Right cardiac atrium (tissue), 5 donors: ENCODE measurements at regions of chr6 and their contacts with region 1.

Region 1: GRCh38 chr6:139355172-139355571 is 19.3 kb downstream of the CITED2 start:
- DNase-seq: no peak
- ATAC-seq: no peak
- H3K4me3 ChIP-seq: no peak overlapping the region
- H3K27ac ChIP-seq: no peak overlapping the region
- H3K4me1 ChIP-seq: no peaks in the 10 kb centered on the region
- H3K27me3 ChIP-seq: no peaks in the 10 kb centered on the region

Region 2: GRCh38 chr6:139240161-139241010 is 114.8 kb before region 1 on chr6:
- intact Hi-C with region 1: loop called in 1 of 4 experiments (anchors 10 kb)
- DNase-seq: no peak
- ATAC-seq: no peak
- H3K4me3 ChIP-seq: no peak overlapping the region
- H3K27ac ChIP-seq: no peak overlapping the region
- H3K4me1 ChIP-seq: no peaks in the 10 kb centered on the region
- H3K27me3 ChIP-seq: no peaks in the 10 kb centered on the region

Region 3: GRCh38 chr6:139308286-139308916 is 46.8 kb before region 1 on chr6:
- intact Hi-C with region 1: loop called in 1 of 4 experiments (anchors 10 kb)
- DNase-seq: no peak
- ATAC-seq: peak in 1 of 2 donors; percentile 54
- H3K4me3 ChIP-seq: no peak overlapping the region
- H3K27ac ChIP-seq: no peak overlapping the region
- H3K4me1 ChIP-seq: no peaks in the 10 kb centered on the region
- H3K27me3 ChIP-seq: no peaks in the 10 kb centered on the region

Region 4: DNA sequence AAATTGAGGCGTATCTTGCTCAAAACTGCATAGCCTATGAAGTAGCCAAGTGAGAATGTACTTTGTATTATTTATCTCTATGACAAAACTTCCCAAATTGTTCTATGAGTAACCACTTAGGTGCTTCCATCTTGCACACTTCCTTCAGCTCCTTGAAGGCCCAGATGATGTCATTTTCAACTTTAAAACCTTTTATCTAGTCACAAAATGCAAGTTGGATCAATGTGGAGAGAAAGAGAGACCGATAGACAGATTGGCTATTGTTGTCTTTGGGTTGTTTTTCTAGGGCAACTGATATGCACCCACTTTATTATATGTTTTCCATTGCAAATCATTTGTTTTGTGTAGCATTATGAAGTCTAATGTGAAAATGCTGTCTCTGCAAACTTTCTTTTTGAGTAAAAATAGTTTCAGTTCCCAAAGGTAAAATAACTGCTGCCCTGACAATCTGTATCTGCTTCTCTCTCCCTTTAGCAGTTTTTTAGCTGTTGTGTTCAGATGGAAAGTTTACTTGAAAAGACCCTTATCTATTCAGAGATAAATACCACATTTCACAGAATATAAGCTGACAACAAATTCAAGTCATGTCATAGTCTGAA is 93.0 kb after region 1 on chr6:
- intact Hi-C with region 1: no loop called
- DNase-seq: no peak
- ATAC-seq: no peak
- H3K4me3 ChIP-seq: no peak overlapping the region
- H3K27ac ChIP-seq: no peak overlapping the region
- H3K4me1 ChIP-seq: no peaks in the 10 kb centered on the region
- H3K27me3 ChIP-seq: no peaks in the 10 kb centered on the region